Sigmoid colon (tissue), 7 donors: ENCODE measurements at regions of chr19 and their contacts with region 1.

Region 1: DNA sequence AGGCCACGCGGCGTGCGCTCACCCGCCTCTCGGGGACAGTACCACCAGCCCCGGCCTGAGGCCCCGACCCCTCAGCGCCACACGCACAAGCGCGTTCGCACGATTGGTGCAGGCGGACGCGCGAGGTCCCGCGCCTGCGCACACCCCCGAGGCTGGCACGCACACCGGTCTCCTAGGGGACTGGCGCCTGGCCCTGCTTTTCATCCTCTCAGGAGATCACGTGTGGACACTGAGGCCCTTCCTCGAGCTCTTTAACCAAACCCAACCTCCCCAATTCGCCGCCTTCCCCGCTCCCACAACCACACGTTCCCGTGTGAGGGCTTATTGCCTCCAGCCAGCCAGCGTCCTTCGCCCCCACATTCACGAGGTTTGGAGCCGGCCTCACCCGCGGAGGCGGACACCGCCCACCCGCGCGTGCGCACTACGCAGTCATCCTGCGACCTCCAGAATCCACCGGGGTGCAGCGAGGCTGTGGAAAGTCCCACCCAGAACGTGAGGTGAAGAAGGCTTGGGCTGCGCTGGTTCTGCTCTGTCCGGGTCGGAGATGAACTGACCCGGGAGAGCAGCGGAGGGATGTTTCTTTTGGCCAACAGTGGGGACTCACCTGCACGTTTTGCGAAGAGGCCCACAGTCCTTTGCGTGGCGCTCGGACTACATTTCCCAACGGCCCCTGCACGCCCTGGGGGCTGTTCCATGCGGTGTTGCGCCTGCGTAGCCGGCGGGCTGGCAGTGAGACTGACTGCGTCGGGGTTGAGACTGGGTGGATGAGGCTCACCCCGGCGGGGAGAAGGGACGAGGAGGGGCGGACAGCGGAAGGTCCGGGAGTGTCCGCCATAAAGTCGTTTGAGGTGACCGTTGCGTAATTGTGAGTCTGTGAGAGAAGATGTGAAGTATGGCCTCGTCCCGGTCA is 539 bp upstream of the ZNF667 start:
- DNase-seq: peak; percentile 96
- H3K4me3 ChIP-seq: peak overlapping the region; percentile 56 to 85 (median 64)
- H3K27ac ChIP-seq: peak overlapping the region; percentile 82 to 90 (median 86)
- H3K4me1 ChIP-seq: peaks cover 0 to 26% (median 22%) of the 10 kb centered on the region in 4 donors
- H3K27me3 ChIP-seq: no peaks in the 10 kb centered on the region
- CTCF ChIP-seq: no peak
- EP300 ChIP-seq: no peak
- POLR2A ChIP-seq: peak; percentile 43 to 50

Region 2: DNA sequence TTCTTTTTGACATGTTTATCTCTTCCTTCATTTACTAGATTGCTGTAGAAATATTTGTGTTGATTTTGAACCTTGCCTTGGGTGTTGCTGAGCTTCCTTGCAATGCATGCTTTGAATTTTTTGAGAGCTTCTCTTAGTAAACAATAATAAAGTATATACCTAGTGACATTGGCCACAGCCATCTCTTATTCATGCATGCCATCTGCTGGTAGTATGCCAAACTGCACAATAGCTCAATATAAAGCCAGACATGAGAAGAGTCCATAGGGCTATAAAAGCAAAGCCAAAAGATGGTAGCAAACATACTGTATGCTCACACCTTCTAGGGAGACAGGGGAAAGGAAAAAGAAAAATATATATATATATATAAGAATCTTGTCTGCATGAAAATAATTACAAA is 144.2 kb before region 1 on chr19:
- intact Hi-C with region 1: no loop called
- DNase-seq: no peak
- H3K4me3 ChIP-seq: no peak overlapping the region
- H3K27ac ChIP-seq: no peak overlapping the region
- H3K4me1 ChIP-seq: no peaks in the 10 kb centered on the region
- H3K27me3 ChIP-seq: no peaks in the 10 kb centered on the region
- CTCF ChIP-seq: peak in 2 of 4 experiments; percentile 15 to 29
- EP300 ChIP-seq: no peak
- POLR2A ChIP-seq: no peak

Region 3: GRCh38 chr19:56403764-56404704 is 73.7 kb before region 1 on chr19 and contains the start of gene ZNF583:
- intact Hi-C with region 1: loop called (anchors 5 kb)
- DNase-seq: peak; percentile 99
- H3K4me3 ChIP-seq: peak within 1 kb of the TSS; percentile 61 to 79 (median 73)
- H3K27ac ChIP-seq: peak within 1 kb of the TSS; percentile 89 to 96 (median 94)
- H3K4me1 ChIP-seq: peaks cover 0 to 17% (median 15%) of the 10 kb centered on the region in 4 donors
- H3K27me3 ChIP-seq: no peaks in the 10 kb centered on the region
- CTCF ChIP-seq: no peak
- EP300 ChIP-seq: no peak
- POLR2A ChIP-seq: no peak
- total RNA-seq, gene ZNF583: 8.7 to 12.7 (median 10.4) TPM

Region 4: DNA sequence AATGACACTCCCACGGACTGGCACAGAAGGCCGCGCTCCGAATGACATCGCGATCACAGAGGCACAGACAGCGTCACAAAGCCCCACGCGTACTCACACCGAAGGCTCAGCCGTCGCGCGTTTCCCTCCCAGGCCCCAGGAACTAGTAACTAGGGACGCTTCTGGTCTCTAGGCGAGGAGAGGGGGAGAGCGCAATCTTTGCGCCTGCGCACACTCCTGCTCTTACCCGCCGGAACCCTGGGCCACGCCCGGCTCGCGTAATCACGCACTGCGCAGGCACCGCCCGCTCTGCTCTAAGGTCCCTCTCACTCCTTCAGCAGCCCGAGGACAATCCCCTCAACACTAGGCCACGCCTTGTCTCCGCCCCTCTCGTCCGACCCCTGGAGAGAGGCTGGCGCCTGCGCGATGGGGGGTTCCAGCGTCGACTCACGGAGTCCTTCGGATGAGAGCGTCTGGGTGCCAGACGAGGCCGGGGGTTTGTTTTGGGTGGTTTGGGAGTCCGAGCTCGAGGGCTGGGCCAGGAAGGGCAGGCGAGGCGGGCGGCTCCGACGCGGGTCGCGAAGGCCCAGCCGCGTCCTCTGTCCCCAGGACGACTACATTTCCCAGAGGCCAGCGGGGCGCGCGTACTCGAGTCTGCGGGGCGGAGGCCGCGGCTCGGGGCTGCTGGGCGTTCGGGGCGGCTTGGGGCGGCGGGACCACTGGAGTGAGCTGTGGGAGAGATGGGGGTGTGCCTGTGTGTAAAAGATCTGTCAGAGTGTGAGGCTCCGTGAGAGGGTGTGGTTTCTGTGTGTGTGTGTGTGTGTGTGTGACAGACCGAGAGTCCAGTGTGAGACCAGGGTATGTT is 30.0 kb after region 1 on chr19 and contains the start of gene ZNF471:
- intact Hi-C with region 1: loop called (anchors 1 kb)
- DNase-seq: peak; percentile 99
- H3K4me3 ChIP-seq: peak within 1 kb of the TSS; percentile 68 to 82 (median 80)
- H3K27ac ChIP-seq: peak within 1 kb of the TSS; percentile 94 to 99 (median 96)
- H3K4me1 ChIP-seq: peaks cover 0 to 12% (median 6%) of the 10 kb centered on the region in 4 donors
- H3K27me3 ChIP-seq: no peaks in the 10 kb centered on the region
- CTCF ChIP-seq: no peak
- EP300 ChIP-seq: no peak
- POLR2A ChIP-seq: no peak
- total RNA-seq, gene ZNF471: 8.1 to 11.4 (median 9.3) TPM

Region 5: GRCh38 chr19:56538254-56538760 is 60.6 kb after region 1 on chr19:
- intact Hi-C with region 1: loop called (anchors 1 kb)
- DNase-seq: peak; percentile 96
- H3K4me3 ChIP-seq: peak overlapping the region; percentile 67 to 85 (median 82)
- H3K27ac ChIP-seq: peak overlapping the region; percentile 88 to 92 (median 90)
- H3K4me1 ChIP-seq: peaks cover 0 to 22% (median 17%) of the 10 kb centered on the region in 4 donors
- H3K27me3 ChIP-seq: no peaks in the 10 kb centered on the region
- CTCF ChIP-seq: peak in 1 of 4 experiments; percentile 14
- EP300 ChIP-seq: no peak
- POLR2A ChIP-seq: no peak

Region 6: DNA sequence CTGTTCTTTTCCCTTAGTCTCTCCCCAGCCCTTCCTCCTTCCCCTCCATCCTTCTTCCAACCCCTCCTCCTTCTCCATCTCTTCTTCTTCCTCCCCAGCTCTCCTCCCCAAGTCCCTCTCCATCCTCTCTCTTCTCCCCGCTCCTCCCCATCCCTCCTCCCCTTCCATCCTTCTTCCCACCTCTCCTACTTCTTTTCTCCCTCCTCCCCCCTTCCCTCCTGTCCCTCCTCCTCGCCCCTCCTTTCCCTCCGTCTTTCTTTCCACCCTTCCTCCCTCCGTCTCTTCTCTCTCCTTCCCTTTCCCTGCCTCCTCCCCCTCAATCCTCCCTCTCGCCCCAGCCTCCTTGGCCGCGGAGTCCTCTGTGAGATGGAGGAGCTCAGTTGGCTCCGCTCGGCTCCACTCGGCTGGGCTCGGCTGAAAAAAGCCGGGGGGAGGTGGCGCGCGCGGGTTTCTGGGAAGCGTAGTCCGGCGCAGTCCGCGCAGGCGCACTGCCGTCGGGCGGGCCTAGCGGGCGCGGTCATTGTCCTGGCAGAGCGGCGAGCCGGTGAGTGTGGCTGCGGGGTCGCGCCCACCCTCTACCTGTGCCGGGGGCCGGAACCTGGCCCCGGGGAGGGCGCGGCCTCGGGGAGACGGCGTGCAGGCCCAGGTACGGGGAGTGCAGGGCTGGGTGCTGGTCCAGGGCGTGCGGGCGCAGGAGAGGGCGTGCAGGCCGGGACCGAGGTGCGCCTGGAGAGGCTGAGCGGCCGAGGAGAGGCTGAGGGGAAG is 117.3 kb after region 1 on chr19 and contains the start of gene ZNF71:
- intact Hi-C with region 1: loop called (anchors 5 kb)
- DNase-seq: peak; percentile 93
- H3K4me3 ChIP-seq: peak within 1 kb of the TSS; percentile 80 to 100 (median 90)
- H3K27ac ChIP-seq: peak within 1 kb of the TSS; percentile 71 to 80 (median 79)
- H3K4me1 ChIP-seq: peaks cover 0 to 19% (median 8%) of the 10 kb centered on the region in 4 donors
- H3K27me3 ChIP-seq: no peaks in the 10 kb centered on the region
- CTCF ChIP-seq: no peak
- EP300 ChIP-seq: no peak
- POLR2A ChIP-seq: no peak
- total RNA-seq, gene ZNF71: 10.4 to 18.0 (median 11.1) TPM